PC-9 (cell line): ENCODE measurements at regions of chr3 and their contacts with region 1.

Region 1: GRCh38 chr3:13110678-13111116 is 37.5 kb upstream of the IQSEC1 start:
- DNase-seq: peak; percentile 45 to 90
- H3K4me3 ChIP-seq: peak overlapping the region; percentile 31; the same call in 1 of the 2 replicates
- H3K27ac ChIP-seq: peak overlapping the region; percentile 82
- H3K4me1 ChIP-seq: peaks cover 84% of the 10 kb centered on the region
- H3K27me3 ChIP-seq: no peaks in the 10 kb centered on the region
- CTCF ChIP-seq: no peak

Region 2: GRCh38 chr3:13159942-13160341 is 49.2 kb after region 1 on chr3:
- CTCF ChIA-PET with region 1: no interaction called
- POLR2A ChIA-PET with region 1: interaction called, 11 read pairs
- intact Hi-C with region 1: no loop called
- DNase-seq: peak; percentile 27 to 85
- H3K4me3 ChIP-seq: no peak overlapping the region
- H3K27ac ChIP-seq: peak overlapping the region; percentile 34
- H3K4me1 ChIP-seq: peaks cover 30% of the 10 kb centered on the region
- H3K27me3 ChIP-seq: no peaks in the 10 kb centered on the region
- CTCF ChIP-seq: no peak

Region 3: DNA sequence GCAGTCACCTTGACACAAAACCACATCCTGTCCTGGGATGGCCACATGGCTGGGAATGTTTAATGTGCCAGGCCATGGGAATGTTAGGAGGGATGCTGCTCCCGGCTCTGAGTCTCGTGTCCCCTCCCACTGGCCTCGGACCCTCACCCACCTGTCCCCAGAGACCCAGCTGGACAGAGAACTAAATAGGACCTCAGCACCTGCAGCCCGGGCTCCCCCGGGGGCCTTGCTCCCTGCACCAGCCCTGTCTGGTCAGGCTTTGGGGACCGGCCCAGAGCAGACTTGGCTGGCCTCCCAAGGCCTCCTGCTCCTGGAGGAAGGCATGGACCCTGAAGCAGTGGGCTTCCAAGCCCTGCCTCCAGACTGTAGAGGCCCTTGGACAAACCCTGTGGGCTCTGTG is 62.5 kb after region 1 on chr3:
- CTCF ChIA-PET with region 1: no interaction called
- POLR2A ChIA-PET with region 1: no interaction called
- intact Hi-C with region 1: no loop called
- DNase-seq: no peak
- H3K4me3 ChIP-seq: no peak overlapping the region
- H3K27ac ChIP-seq: no peak overlapping the region
- H3K4me1 ChIP-seq: no peaks in the 10 kb centered on the region
- H3K27me3 ChIP-seq: no peaks in the 10 kb centered on the region
- CTCF ChIP-seq: no peak

Region 4: DNA sequence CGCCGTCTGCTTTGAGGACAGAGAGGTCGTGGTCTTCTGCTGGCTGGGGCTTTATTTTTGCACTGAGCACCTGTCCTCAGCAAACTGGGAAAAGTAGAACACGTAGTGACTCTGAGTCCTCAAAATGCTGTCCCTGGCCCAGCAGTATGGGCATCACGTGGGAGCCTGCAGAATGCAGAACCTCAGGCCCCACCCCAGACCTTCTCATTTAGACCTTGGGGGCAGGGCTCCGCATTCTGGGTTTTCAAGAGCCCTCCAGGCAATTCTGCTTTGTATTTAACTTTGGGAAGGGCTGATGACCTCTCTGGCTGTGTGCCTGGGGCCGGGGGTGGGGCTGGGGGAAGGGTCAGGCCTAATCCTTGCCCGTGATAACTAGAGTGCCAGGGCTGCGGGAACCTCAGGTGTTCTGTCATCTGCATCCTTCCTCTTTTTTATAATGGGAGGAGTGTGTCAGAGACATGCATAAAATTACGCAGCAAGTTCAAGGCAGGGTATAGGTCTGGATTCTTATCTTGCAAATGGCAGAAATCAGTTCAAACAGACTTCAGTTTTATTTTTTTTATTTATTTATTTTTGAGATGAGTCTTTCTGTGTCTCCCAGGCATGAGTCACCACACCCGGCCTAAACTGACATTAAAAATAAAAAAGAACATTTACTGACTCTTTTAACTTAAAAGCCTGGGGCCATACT is 1302.8 kb after region 1 on chr3:
- CTCF ChIA-PET with region 1: no interaction called
- POLR2A ChIA-PET with region 1: no interaction called
- intact Hi-C with region 1: no loop called
- DNase-seq: peak; percentile 54 to 56
- H3K4me3 ChIP-seq: no peak overlapping the region
- H3K27ac ChIP-seq: peak overlapping the region; percentile 99
- H3K4me1 ChIP-seq: peaks cover 85% of the 10 kb centered on the region
- H3K27me3 ChIP-seq: no peaks in the 10 kb centered on the region
- CTCF ChIP-seq: no peak